Activated naive CD4-positive, alpha-beta T cell treated with anti-CD3 and anti-CD28 coated beads for 36 hours (primary cell): ENCODE measurements at regions of chr5 and their contacts with region 1.

Region 1: DNA sequence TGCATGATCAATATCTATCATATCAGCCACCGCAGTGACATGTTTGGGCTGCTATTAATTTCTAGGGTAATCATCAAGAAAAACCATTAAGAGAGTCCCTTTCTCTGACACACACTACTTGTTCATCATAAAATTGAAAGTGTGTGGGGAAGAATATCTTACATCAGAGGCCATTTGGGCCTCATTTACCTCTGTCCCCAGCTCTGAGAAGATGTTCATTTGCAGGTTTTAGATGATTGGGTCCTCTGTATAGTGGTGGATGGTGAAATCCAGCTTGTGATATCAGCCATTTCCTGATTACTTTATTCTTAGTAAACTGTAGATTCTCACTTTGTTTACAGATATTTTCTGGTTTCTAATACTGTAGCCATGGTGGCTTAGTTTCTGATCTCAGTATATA is 29.8 kb upstream of the PJA2 start:
- DNase-seq: no peak
- H3K4me3 Mint-ChIP-seq: no peak overlapping the region
- H3K27ac Mint-ChIP-seq: no peak overlapping the region
- H3K4me1 Mint-ChIP-seq: no peaks in the 10 kb centered on the region
- H3K27me3 Mint-ChIP-seq: no peaks in the 10 kb centered on the region

Region 2: DNA sequence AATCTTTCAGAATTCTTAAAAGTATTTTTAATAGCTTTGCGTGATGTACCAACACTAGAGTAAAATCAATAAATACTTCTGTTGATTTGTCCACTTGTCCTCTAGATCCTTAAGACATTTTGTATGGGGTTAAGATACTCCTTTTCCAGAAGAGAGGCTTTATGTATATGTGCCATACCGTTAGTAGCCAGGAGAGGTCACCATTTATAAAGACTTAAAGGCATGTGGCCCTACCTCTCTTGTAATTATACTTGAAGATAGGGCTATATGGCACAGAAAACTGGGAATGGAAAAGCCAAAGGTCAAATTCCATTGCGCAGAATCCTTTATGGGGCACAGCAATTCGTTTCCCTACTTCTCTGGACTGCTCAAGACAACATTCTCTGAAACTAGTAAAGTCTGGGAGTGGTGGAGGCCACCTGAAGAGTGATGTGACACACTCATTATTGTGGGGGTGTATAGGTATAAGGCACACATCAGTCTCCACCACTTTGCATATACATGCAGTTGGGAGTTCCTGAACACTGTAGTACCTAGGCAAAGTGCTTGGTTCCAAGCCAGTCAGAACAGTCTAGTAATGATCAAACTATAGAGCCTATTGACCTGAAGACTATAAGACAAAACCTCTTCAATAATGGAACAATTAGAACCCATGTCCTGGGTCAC is 917.6 kb before region 1 on chr5:
- CTCF ChIA-PET with region 1: no interaction called
- intact Hi-C with region 1: loop called (anchors 5 kb)
- DNase-seq: peak; percentile 23
- H3K4me3 Mint-ChIP-seq: no peak overlapping the region
- H3K27ac Mint-ChIP-seq: no peak overlapping the region
- H3K4me1 Mint-ChIP-seq: no peaks in the 10 kb centered on the region
- H3K27me3 Mint-ChIP-seq: peaks cover 2% of the 10 kb centered on the region

Region 3: DNA sequence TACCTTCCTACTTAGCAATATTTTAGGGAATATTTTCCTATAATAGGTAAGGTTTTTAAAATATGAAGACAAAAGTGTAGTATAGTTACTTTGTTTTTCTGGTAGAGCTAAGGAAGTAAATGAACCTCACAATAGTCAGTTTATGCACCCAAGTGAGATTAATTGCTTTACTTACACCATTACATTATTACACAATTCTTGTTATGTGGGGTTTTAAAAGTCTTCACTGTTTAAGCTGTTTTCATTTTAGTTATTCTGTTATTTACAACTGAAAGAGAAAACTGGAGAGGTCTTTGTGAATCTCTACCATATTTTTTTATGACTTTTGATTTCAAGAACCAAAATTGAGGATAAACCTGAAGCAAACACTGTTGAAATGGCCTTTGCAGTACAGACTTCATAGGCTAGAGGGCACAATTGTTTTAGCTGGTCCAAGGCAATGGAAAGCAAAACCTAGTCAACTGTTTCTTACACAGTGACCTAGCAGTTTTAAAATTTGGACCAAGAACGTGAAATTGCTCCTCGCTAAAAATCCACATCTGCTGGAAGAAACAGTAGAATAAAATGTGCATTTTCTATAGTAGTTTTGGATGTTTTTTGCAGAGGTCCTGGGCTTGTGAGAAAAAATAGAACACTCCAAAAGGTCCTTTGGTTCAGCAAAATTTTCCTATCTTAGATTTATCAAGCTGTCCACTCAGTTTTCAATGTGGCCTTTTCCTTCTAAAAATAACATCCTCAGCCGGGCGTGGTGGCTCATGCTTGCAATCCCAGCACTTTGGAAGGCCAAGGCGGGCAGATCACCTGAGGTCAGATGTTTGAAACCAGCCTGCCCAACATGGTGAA is 758.3 kb before region 1 on chr5:
- CTCF ChIA-PET with region 1: no interaction called
- intact Hi-C with region 1: loop called (anchors 1 kb)
- DNase-seq: peak; percentile 48
- H3K4me3 Mint-ChIP-seq: no peak overlapping the region
- H3K27ac Mint-ChIP-seq: no peak overlapping the region
- H3K4me1 Mint-ChIP-seq: no peaks in the 10 kb centered on the region
- H3K27me3 Mint-ChIP-seq: no peaks in the 10 kb centered on the region

Region 4: DNA sequence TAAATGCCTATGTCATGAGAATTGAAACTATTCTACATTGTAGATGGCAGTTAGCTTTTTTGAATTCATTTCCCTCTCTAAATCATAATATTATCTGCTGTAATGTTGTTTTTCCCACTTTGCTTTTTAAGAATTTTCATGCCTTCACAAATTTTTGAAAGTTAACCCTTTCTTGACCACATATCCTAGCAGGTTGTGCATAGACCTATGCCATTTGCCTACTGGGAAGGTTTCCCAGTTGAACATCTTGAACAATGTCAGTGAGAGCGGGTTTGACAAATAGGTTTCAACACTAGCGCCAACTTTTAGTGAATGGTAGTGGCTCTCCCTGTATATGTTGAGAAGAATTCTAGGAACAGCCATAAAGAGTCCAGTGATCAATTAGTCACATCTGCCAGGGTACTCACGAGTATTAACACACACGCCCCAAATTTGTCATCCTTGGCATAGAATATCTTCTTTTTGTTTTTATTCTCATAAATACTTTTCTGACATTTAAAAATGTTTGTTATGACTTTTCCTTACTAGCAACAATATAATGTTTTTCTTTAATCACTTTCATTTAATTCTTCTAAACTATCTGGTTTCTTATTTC is 337.4 kb before region 1 on chr5:
- CTCF ChIA-PET with region 1: no interaction called
- intact Hi-C with region 1: loop called (anchors 5 kb)
- DNase-seq: no peak
- H3K4me3 Mint-ChIP-seq: no peak overlapping the region
- H3K27ac Mint-ChIP-seq: no peak overlapping the region
- H3K4me1 Mint-ChIP-seq: no peaks in the 10 kb centered on the region
- H3K27me3 Mint-ChIP-seq: no peaks in the 10 kb centered on the region

Region 5: DNA sequence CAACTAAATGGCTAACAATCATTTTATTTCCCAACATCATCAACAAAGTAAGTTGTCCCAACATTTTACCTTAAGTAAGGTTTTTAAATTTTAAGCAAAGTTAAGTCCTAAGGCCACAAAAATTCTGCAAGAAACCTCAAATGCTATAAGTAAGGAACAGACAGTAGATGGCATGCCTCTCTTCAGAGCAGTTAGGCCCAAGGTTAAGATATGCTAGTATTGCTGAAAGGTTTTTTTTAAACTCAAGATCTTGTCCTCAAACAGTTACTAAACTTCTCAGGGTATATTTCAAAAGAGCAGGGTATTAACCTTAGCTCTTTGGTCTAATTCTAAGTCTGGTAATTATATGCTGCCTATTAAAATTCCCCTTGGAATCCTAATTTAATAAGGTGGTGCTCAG is 65.0 kb before region 1 on chr5:
- CTCF ChIA-PET with region 1: no interaction called
- intact Hi-C with region 1: loop called (anchors 1 kb)
- DNase-seq: no peak
- H3K4me3 Mint-ChIP-seq: no peak overlapping the region
- H3K27ac Mint-ChIP-seq: no peak overlapping the region
- H3K4me1 Mint-ChIP-seq: peaks cover 49% of the 10 kb centered on the region
- H3K27me3 Mint-ChIP-seq: no peaks in the 10 kb centered on the region

Region 6: GRCh38 chr5:109388407-109388806 is 51.2 kb before region 1 on chr5:
- CTCF ChIA-PET with region 1: no interaction called
- intact Hi-C with region 1: no loop called
- DNase-seq: no peak
- H3K4me3 Mint-ChIP-seq: no peak overlapping the region
- H3K27ac Mint-ChIP-seq: no peak overlapping the region
- H3K4me1 Mint-ChIP-seq: peaks cover 67% of the 10 kb centered on the region
- H3K27me3 Mint-ChIP-seq: no peaks in the 10 kb centered on the region

Region 7: GRCh38 chr5:109411627-109412026 is 28.0 kb before region 1 on chr5:
- CTCF ChIA-PET with region 1: no interaction called
- intact Hi-C with region 1: no loop called
- DNase-seq: no peak
- H3K4me3 Mint-ChIP-seq: no peak overlapping the region
- H3K27ac Mint-ChIP-seq: no peak overlapping the region
- H3K4me1 Mint-ChIP-seq: peaks cover 33% of the 10 kb centered on the region
- H3K27me3 Mint-ChIP-seq: no peaks in the 10 kb centered on the region

Region 8: DNA sequence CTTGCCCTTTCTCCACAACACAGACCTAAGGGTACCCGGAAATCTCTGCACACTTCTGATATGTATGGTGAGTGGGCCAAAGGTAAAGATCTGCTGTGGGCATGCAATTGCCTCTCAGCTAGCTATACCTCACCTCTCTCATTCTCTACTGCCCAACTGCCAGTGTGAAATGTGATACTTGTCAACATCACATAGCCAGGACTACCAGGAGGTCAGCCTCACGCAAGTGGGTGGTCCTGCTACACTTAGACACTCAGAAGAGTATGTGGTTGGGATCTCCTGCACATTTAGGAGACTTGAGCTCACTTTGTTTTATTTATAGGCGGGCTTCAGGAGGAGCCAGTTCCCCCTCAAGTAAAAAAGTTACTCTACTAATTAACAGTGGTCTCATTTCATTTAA is 162.1 kb after region 1 on chr5:
- CTCF ChIA-PET with region 1: no interaction called
- intact Hi-C with region 1: no loop called
- DNase-seq: no peak
- H3K4me3 Mint-ChIP-seq: no peak overlapping the region
- H3K27ac Mint-ChIP-seq: no peak overlapping the region
- H3K4me1 Mint-ChIP-seq: no peaks in the 10 kb centered on the region
- H3K27me3 Mint-ChIP-seq: no peaks in the 10 kb centered on the region

Region 9: DNA sequence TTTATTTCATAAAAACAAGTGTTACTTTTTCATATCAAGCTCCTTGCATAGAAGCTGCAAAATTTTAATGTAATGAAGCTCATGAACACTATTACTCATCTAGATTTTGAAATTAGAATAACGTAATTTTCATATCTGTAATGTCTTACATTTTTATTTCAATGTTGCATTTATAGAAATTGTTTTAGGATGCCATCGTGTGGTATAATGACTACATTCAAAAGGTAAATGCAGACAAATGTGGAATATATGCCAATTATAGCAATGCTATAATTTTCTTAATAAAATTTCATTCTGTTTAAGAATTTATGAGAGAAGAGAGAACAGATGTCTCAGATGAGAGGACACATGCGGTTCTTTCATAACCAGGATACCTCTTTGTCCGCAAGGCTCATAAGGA is 1056.7 kb after region 1 on chr5:
- CTCF ChIA-PET with region 1: no interaction called
- intact Hi-C with region 1: no loop called
- DNase-seq: no peak
- H3K4me3 Mint-ChIP-seq: no peak overlapping the region
- H3K27ac Mint-ChIP-seq: no peak overlapping the region
- H3K4me1 Mint-ChIP-seq: no peaks in the 10 kb centered on the region
- H3K27me3 Mint-ChIP-seq: no peaks in the 10 kb centered on the region